ENCODE measurements at regions of chr17 and their contacts with region 1.

Region 1: GRCh38 chr17:1229432-1229899 is 40.8 kb upstream of the BHLHA9 start:
- DNase-seq: peak; percentile 80
- ATAC-seq: peak; percentile 62
- H3K4me3 Mint-ChIP-seq: peak overlapping the region; percentile 79
- H3K27ac Mint-ChIP-seq: peak overlapping the region; percentile 59
- H3K4me1 Mint-ChIP-seq: peaks cover 32% of the 10 kb centered on the region
- H3K27me3 Mint-ChIP-seq: peaks cover 7% of the 10 kb centered on the region
- CTCF ChIP-seq: no peak

Region 2: DNA sequence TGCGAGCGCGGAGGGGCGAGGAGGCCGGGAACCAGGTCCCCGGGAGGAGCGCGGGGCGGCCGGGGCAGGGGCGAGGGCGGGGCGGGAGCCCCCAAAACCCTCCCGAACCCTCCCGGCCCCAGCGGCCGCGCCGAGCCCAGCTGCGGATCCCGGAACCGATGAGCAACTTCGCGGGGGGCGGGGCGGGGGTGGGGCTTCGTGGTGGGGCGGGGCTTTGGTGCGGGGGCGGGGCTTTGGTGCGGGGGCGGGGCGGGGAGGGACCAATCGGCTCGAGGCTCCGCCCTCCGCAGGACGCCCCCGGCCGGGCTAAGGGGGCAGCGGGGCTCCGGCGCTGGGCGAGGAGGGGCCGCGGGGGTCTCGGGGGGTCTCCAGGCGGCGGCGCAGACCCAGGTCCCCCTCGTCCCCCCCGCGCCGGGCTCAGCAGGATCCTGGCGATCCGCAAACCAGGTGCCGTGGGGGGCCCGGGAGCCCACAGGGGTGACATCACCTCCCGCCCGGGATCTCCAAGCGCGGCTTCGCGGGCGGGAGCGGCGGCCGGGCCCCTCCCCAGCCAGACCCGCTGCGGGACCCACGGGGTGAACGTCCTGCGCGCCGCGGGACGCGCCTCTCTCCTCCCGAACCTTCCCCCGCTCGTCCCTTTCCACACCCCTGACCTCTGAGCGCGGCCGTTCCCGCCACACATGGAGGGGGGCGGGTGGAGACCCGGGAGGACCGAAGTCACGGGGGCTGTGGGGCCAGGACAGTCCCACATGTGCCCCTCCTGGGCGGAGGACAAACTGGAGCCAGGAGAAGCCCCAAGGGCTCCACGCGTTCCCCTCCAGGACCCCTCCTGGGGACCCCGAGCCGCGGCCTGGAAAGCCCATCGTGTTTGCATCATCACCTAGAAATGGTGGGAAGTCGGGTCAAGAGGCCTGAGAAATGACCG is 49.4 kb before region 1 on chr17 and contains the start of gene ABR:
- CTCF ChIA-PET with region 1: interaction called, 5 read pairs
- POLR2A ChIA-PET with region 1: interaction called, 24 read pairs
- intact Hi-C with region 1: loop called (anchors 2 kb)
- DNase-seq: peak; percentile 55
- ATAC-seq: peak; percentile 5
- H3K4me3 Mint-ChIP-seq: peak within 1 kb of the TSS; percentile 72
- H3K27ac Mint-ChIP-seq: no peak within 1 kb of the TSS
- H3K4me1 Mint-ChIP-seq: peaks cover 54% of the 10 kb centered on the region
- H3K27me3 Mint-ChIP-seq: no peaks in the 10 kb centered on the region
- CTCF ChIP-seq: no peak
- total RNA-seq, gene ABR: 132 and 150 TPM in 2 replicates

Region 3: GRCh38 chr17:1197781-1198490 is 31.5 kb before region 1 on chr17:
- CTCF ChIA-PET with region 1: interaction called, 9 read pairs
- POLR2A ChIA-PET with region 1: interaction called, 31 read pairs
- intact Hi-C with region 1: loop called (anchors 1 kb)
- DNase-seq: peak; percentile 58
- ATAC-seq: peak; percentile 87
- H3K4me3 Mint-ChIP-seq: peak overlapping the region; percentile 63
- H3K27ac Mint-ChIP-seq: peak overlapping the region; percentile 80
- H3K4me1 Mint-ChIP-seq: peaks cover 69% of the 10 kb centered on the region
- H3K27me3 Mint-ChIP-seq: no peaks in the 10 kb centered on the region
- CTCF ChIP-seq: no peak

Region 4: GRCh38 chr17:1203111-1203966 is 26.1 kb before region 1 on chr17:
- CTCF ChIA-PET with region 1: interaction called, 9 read pairs
- POLR2A ChIA-PET with region 1: interaction called, 31 read pairs
- intact Hi-C with region 1: loop called (anchors 1 kb)
- DNase-seq: peak; percentile 44
- ATAC-seq: peak; percentile 56
- H3K4me3 Mint-ChIP-seq: no peak overlapping the region
- H3K27ac Mint-ChIP-seq: no peak overlapping the region
- H3K4me1 Mint-ChIP-seq: peaks cover 56% of the 10 kb centered on the region
- H3K27me3 Mint-ChIP-seq: no peaks in the 10 kb centered on the region
- CTCF ChIP-seq: no peak

Region 5: DNA sequence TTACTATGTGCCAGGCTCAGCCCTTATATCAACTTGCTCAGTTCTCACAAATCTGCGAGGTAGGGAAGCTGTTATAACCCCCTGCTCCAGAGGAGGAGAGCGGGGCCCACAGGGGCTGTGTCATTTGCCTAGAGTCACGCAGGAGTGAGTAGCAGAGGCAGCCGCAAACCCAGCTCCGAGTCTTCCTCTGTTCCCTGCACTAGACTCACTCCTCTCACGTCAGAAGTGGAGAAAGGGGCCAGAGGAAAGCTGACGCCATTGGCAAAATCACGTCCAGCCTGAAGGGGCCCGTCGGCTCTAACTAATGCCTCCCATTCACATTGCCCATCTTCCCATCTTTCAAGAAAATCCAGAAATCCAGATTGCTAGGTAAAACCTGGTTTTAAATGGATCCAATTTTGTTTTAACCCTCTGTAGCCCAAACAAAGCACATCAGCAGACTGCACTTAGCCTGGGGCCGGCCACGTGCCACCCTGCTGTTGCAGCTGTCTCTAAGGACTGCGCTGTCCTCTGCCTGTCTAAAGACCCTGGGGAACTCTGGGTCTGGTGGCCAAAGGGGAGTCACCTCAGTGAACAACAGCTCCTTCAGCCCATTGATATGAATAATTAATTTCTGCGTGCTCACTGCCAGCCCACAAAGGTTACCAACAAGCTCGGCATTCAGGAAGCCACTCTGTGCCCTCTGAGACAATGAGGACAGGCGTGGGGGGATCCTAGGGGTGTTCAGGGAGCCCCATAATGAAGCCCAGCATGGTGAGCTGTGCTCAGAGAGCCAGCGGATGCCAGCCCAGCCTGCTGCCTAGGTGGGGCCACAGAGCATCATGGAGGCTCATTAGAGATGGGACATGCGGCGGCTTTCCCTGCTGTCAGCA is 13.0 kb before region 1 on chr17:
- CTCF ChIA-PET with region 1: interaction called, 9 read pairs
- POLR2A ChIA-PET with region 1: interaction called, 29 read pairs
- intact Hi-C with region 1: loop called (anchors 1 kb)
- DNase-seq: no peak
- ATAC-seq: peak; percentile 88
- H3K4me3 Mint-ChIP-seq: peak overlapping the region; percentile 75
- H3K27ac Mint-ChIP-seq: peak overlapping the region; percentile 75
- H3K4me1 Mint-ChIP-seq: peaks cover 79% of the 10 kb centered on the region
- H3K27me3 Mint-ChIP-seq: no peaks in the 10 kb centered on the region
- CTCF ChIP-seq: no peak

Region 6: DNA sequence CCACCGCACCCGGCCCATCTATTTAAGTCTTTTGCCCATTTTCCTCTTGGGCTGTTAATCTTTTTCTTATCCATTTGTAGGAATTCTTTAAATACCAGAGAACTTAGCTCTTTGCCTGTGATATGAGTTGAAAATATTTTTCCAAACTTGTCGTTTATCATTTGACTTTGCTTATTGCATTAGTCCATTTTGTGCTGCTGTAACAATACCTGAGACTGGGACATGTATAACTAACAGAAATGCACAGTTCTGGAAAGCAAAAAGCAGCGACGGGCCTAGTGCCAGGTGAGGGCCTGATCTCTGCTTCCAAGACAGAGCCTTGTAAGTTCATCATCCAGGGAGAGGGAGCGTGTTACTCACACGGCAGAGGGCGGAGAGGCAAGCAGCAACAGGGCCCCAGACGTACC is 15.1 kb after region 1 on chr17:
- CTCF ChIA-PET with region 1: no interaction called
- POLR2A ChIA-PET with region 1: interaction called, 11 read pairs
- intact Hi-C with region 1: no loop called
- DNase-seq: no peak
- ATAC-seq: no peak
- H3K4me3 Mint-ChIP-seq: no peak overlapping the region
- H3K27ac Mint-ChIP-seq: no peak overlapping the region
- H3K4me1 Mint-ChIP-seq: no peaks in the 10 kb centered on the region
- H3K27me3 Mint-ChIP-seq: peaks cover 11% of the 10 kb centered on the region
- CTCF ChIP-seq: no peak

Region 7: GRCh38 chr17:1260086-1260769 is 30.8 kb after region 1 on chr17:
- CTCF ChIA-PET with region 1: interaction called, 5 read pairs
- POLR2A ChIA-PET with region 1: interaction called, 10 read pairs
- intact Hi-C with region 1: loop called (anchors 2 kb)
- DNase-seq: no peak
- ATAC-seq: no peak
- H3K4me3 Mint-ChIP-seq: peak overlapping the region; percentile 41
- H3K27ac Mint-ChIP-seq: no peak overlapping the region
- H3K4me1 Mint-ChIP-seq: peaks cover 16% of the 10 kb centered on the region
- H3K27me3 Mint-ChIP-seq: peaks cover 16% of the 10 kb centered on the region
- CTCF ChIP-seq: no peak

Measured in activated B cell treated with CpG ODN at 0.5 μM for 24 hours (primary cell).